MCF 10A (cell line): ENCODE measurements at regions of chr17 and their contacts with region 1.

Region 1: GRCh38 chr17:32783602-32784001 is 93.3 kb downstream of the MYO1D start:
- DNase-seq: peak; percentile 53
- H3K4me3 Mint-ChIP-seq: no peak overlapping the region
- H3K27ac Mint-ChIP-seq: peak overlapping the region; percentile 73
- H3K4me1 Mint-ChIP-seq: peaks cover 5% of the 10 kb centered on the region
- H3K27me3 Mint-ChIP-seq: no peaks in the 10 kb centered on the region
- CTCF ChIP-seq: peak; percentile 63

Region 2: GRCh38 chr17:32794533-32795246 is 11.1 kb after region 1 on chr17:
- CTCF ChIA-PET with region 1: interaction called, 26 read pairs
- POLR2A ChIA-PET with region 1: no interaction called
- intact Hi-C with region 1: no loop called
- DNase-seq: no peak
- H3K4me3 Mint-ChIP-seq: no peak overlapping the region
- H3K27ac Mint-ChIP-seq: no peak overlapping the region
- H3K4me1 Mint-ChIP-seq: peaks cover 6% of the 10 kb centered on the region
- H3K27me3 Mint-ChIP-seq: no peaks in the 10 kb centered on the region
- CTCF ChIP-seq: no peak

Region 3: DNA sequence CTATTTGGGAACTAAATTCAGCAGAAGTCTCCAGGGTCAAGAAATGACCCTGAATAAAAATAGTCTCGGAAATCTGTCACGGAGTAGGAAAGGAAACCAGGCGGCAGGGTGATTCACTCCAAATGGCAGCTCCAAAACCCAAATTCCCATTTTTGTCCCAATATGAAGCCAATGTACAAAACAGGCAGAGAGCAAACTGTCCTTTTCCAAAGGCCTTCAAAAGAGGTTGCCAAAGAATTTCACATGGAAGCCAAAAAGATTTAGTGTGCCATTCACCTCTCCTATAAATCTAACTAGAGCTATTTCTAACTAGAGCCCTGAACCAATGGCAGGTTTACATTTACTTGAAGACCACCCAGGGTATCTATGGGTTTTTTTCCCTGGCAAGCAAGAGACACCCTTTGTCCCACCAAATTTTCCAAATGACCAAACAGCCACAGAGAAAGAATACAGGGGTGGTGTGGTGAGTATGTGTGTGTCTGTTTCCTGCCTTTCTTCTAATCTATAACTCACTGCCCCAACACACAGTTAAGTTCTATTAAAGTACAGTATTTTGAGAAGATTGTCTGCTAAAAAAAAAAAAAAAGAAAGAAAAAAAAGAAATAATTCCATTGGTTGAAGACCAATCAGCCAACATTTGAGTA is 86.5 kb after region 1 on chr17:
- CTCF ChIA-PET with region 1: interaction called, 213 read pairs
- POLR2A ChIA-PET with region 1: interaction called, 36 read pairs
- intact Hi-C with region 1: no loop called
- DNase-seq: no peak
- H3K4me3 Mint-ChIP-seq: no peak overlapping the region
- H3K27ac Mint-ChIP-seq: no peak overlapping the region
- H3K4me1 Mint-ChIP-seq: peaks cover 16% of the 10 kb centered on the region
- H3K27me3 Mint-ChIP-seq: no peaks in the 10 kb centered on the region
- CTCF ChIP-seq: no peak

Region 4: DNA sequence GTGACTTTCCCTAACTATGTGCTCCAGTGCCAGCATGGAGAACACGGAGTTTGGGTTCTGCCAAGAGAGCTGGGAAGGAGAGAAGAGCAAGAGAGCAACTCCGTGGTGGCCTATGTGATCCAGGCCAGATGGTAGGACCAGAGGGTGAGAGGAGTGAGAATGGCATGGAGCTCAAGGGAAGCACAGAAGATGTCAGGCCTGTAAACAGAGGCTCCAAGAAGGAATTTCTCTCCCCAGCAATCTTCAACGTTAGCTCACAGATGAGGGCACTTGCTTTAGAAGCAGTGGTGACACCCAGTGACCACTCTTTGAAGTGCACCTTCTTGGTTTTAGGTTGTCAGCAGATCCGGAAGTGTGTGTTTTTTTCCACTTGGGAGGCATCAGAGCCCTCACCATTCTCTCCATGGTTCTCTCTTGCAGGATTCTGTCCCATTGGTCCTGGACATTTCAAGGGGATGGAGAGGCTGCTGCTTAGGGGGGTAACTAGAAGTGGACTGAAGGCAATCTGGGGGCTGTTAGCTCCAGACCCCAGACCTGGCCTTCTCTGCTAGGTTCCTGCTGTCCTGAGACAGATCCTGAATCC is 126.3 kb after region 1 on chr17:
- CTCF ChIA-PET with region 1: interaction called, 102 read pairs
- POLR2A ChIA-PET with region 1: interaction called, 4 read pairs
- intact Hi-C with region 1: loop called (anchors 1 kb)
- DNase-seq: peak; percentile 78
- H3K4me3 Mint-ChIP-seq: no peak overlapping the region
- H3K27ac Mint-ChIP-seq: no peak overlapping the region
- H3K4me1 Mint-ChIP-seq: peaks cover 5% of the 10 kb centered on the region
- H3K27me3 Mint-ChIP-seq: no peaks in the 10 kb centered on the region
- CTCF ChIP-seq: peak; percentile 64

Region 5: GRCh38 chr17:32936894-32937500 is 153.4 kb after region 1 on chr17:
- CTCF ChIA-PET with region 1: interaction called, 13 read pairs
- POLR2A ChIA-PET with region 1: no interaction called
- intact Hi-C with region 1: loop called (anchors 1 kb)
- DNase-seq: peak; percentile 58
- H3K4me3 Mint-ChIP-seq: no peak overlapping the region
- H3K27ac Mint-ChIP-seq: no peak overlapping the region
- H3K4me1 Mint-ChIP-seq: peaks cover 6% of the 10 kb centered on the region
- H3K27me3 Mint-ChIP-seq: no peaks in the 10 kb centered on the region
- CTCF ChIP-seq: peak; percentile 79